Aorta (tissue), 5 donors: ENCODE measurements at regions of chr5 and their contacts with region 1.

Region 1: DNA sequence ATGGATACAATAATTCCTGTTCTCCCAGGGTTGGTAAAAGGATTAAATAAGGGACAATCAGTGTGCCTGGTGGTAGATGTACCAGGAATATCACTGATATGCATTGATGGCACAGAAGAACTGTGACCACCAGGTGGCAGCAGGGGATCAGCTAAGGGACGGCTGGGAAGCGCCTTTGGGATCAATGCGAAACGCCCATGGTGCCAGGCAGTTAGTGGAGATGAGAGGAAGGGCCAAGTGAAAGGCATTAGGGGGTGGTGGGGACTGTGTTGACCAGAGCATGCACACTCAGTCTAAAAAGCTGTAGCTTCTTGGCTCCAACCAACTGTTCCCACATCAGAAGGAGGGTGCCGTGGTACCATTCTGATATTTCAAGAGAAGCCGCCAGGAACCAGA is 55.6 kb downstream of the ARHGEF37 start:
- DNase-seq: peak in 1 of 2 donors; percentile 85
- ATAC-seq: peak; percentile 77
- H3K4me3 ChIP-seq: no peak overlapping the region
- H3K27ac ChIP-seq: no peak overlapping the region
- H3K4me1 ChIP-seq: no peaks in the 10 kb centered on the region
- H3K27me3 ChIP-seq: no peaks in the 10 kb centered on the region

Region 2: DNA sequence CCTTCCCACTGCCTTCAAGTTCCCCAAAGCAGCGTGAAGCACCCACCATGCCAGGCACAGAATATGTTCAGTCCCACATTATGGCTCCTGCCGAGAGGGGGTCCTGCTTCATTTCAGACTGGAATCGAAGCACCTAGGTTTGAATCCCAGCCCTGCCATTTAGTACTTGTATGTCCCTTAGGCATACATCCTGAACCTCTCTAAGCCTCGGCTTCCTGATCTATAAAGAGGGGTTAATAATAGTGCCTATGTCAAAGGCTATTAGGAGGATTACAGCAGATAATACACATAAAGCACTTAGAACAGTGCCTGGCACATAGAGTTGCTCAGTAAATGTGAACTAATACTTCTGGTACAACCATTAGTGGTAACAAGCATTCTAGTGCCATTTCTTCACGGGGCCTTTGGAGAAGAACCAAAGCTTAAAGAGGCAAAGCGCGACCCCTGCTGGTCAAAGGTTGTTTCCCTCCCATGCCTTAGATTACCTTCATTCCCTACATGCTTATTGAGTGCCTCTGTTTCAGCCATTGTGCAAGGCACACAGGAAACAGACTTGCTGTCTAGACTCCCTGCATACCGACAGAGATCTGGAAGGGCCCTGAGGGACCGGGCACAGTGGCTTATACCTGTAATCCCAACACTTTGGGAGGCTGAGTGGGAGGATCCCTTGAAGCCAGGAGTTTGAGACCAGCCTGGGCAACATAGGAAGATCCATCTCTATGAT is 191.5 kb after region 1 on chr5:
- intact Hi-C with region 1: loop called (anchors 2 kb)
- DNase-seq: peak; percentile 90 to 94
- ATAC-seq: peak; percentile 73
- H3K4me3 ChIP-seq: no peak overlapping the region
- H3K27ac ChIP-seq: no peak overlapping the region
- H3K4me1 ChIP-seq: no peaks in the 10 kb centered on the region
- H3K27me3 ChIP-seq: no peaks in the 10 kb centered on the region

Region 3: DNA sequence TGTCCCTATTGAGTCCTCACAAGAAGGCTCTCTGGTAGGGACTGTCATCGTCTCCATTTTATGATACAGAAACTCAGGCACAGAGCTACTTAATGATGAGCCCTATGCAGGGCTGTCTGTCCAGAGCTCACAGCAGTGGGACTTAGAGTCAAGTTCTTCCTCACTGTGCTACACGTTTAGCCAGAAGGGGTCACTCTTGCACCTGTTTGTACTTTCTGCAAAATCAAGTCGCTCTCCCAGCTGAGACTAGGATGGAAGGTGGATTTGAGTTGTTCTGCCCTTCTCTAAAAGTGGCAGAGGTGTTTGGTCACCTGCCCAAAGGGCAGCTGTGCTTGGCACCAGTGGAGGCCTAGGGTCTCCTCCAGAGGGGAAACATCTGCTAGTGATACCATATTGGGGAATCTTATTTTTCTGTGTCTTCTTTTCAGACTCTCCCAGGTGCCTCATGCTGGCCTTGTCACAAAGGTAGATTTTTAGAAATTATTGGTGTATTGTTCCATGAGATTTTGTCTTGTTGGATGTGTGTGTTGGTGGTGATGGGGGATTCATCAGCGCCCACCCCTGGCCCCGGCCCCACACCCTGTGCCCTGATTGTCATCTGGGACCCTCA is 197.5 kb after region 1 on chr5:
- intact Hi-C with region 1: loop called (anchors 2 kb)
- DNase-seq: peak; percentile 58 to 61
- ATAC-seq: no peak
- H3K4me3 ChIP-seq: no peak overlapping the region
- H3K27ac ChIP-seq: no peak overlapping the region
- H3K4me1 ChIP-seq: no peaks in the 10 kb centered on the region
- H3K27me3 ChIP-seq: no peaks in the 10 kb centered on the region

Region 4: GRCh38 chr5:149990518-149991376 is 353.9 kb after region 1 on chr5:
- intact Hi-C with region 1: loop called (anchors 2 to 5 kb)
- DNase-seq: peak; percentile 76 to 79
- ATAC-seq: peak; percentile 76
- H3K4me3 ChIP-seq: no peak overlapping the region
- H3K27ac ChIP-seq: no peak overlapping the region
- H3K4me1 ChIP-seq: peaks cover 8 to 11% of the 10 kb centered on the region in 2 donors
- H3K27me3 ChIP-seq: no peaks in the 10 kb centered on the region